ENCODE measurements at regions of chr10 and their contacts with region 1.

Region 1: GRCh38 chr10:71371750-71372166 is 25.0 kb upstream of the CDH23 start:
- DNase-seq: no peak
- ATAC-seq: peak; percentile 43
- H3K4me3 Mint-ChIP-seq: peak overlapping the region; percentile 50
- H3K27ac Mint-ChIP-seq: peak overlapping the region; percentile 90
- H3K4me1 Mint-ChIP-seq: peaks cover 44% of the 10 kb centered on the region
- H3K27me3 Mint-ChIP-seq: no peaks in the 10 kb centered on the region
- CTCF ChIP-seq: no peak

Region 2: DNA sequence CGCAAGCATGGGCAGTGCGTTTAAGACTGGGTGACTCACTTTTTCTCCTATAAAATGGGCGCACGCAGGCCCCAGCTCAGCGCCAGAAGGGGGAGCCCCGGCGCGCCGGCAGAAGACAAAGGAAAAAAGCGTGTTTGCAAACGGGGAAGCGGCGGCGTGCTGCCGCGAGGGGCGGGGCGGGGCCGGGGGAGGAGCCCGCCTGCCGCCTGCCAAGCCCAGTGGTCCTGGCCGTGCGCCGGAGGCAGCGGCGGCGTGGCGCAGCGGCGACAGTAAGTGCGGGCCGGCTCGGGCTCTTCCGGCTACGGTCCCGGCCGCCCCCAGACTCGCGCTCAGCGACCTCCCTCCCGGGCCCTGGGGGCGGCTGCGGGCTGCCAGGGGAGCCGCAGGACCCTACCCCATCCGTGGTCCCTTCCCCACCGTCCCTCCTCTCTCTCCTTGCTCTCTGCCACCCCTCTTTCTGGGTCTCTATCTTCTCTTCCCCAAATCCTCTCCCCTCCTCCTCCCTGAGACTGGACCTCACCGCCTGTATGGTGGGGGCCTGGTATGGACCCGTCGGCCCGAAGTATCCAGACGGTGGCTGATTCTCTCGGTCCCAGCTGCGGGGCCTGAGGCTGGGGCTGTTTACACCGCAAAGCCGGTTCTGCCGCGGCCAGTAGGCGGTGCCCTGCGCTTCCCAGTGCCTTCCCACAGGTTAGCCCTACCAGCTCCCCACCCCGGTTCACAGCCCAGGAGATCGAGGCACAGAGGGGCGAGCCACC is 52.5 kb before region 1 on chr10 and contains the start of gene SLC29A3:
- CTCF ChIA-PET with region 1: interaction called, 41 read pairs
- POLR2A ChIA-PET with region 1: interaction called, 34 read pairs
- intact Hi-C with region 1: loop called (anchors 1 kb)
- DNase-seq: peak; percentile 72
- ATAC-seq: peak; percentile 90
- H3K4me3 Mint-ChIP-seq: peak within 1 kb of the TSS; percentile 96
- H3K27ac Mint-ChIP-seq: peak within 1 kb of the TSS; percentile 80
- H3K4me1 Mint-ChIP-seq: peaks cover 13% of the 10 kb centered on the region
- H3K27me3 Mint-ChIP-seq: no peaks in the 10 kb centered on the region
- CTCF ChIP-seq: no peak
- total RNA-seq, gene SLC29A3: 3.1 and 4.3 TPM in 2 replicates

Region 3: GRCh38 chr10:71359364-71360046 is 12.3 kb before region 1 on chr10:
- CTCF ChIA-PET with region 1: no interaction called
- POLR2A ChIA-PET with region 1: interaction called, 12 read pairs
- intact Hi-C with region 1: loop called (anchors 1 kb)
- DNase-seq: no peak
- ATAC-seq: peak; percentile 80
- H3K4me3 Mint-ChIP-seq: no peak overlapping the region
- H3K27ac Mint-ChIP-seq: peak overlapping the region; percentile 72
- H3K4me1 Mint-ChIP-seq: peaks cover 24% of the 10 kb centered on the region
- H3K27me3 Mint-ChIP-seq: no peaks in the 10 kb centered on the region
- CTCF ChIP-seq: no peak

Region 4: GRCh38 chr10:71383972-71384687 is 12.4 kb after region 1 on chr10:
- CTCF ChIA-PET with region 1: interaction called, 15 read pairs
- POLR2A ChIA-PET with region 1: interaction called, 6 read pairs
- intact Hi-C with region 1: loop called (anchors 1 kb)
- DNase-seq: peak; percentile 82
- ATAC-seq: peak; percentile 100
- H3K4me3 Mint-ChIP-seq: no peak overlapping the region
- H3K27ac Mint-ChIP-seq: no peak overlapping the region
- H3K4me1 Mint-ChIP-seq: peaks cover 7% of the 10 kb centered on the region
- H3K27me3 Mint-ChIP-seq: peaks cover 3% of the 10 kb centered on the region
- CTCF ChIP-seq: no peak

Region 5: DNA sequence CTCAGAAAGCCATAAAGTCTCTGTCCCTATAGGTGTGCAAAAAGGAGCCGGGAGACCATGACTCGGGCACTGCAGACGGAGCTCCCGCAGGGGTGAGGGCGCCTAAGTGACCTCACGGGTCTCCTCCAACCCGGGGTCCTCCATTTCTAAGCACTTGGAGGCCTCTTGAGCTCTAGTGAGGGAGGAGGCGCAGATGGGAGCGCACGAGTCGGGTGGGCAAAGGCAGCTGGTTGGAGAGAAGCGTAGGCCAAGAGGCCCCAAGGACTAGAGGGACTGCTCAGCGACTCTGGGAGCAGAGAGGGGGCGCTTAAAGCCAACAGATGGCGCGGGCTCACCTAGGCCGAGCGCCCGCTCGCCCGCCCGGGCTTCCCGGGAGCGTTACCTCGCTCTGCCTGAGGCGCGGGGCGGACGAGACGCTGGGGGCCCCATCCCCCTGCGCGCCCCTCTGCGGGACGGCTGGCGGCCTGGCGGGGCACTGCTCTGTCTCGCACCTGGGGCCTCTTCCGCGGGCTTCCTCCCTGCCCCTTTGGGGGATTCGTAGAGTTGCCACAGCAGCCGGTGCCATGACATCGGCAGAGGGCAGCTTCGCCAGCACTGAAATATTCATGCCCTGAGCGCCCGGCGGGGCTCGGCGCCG is 24.4 kb after region 1 on chr10:
- CTCF ChIA-PET with region 1: interaction called, 3 read pairs
- POLR2A ChIA-PET with region 1: interaction called, 7 read pairs
- intact Hi-C with region 1: loop called (anchors 2 kb)
- DNase-seq: peak; percentile 54
- ATAC-seq: peak; percentile 71
- H3K4me3 Mint-ChIP-seq: peak overlapping the region; percentile 78
- H3K27ac Mint-ChIP-seq: no peak overlapping the region
- H3K4me1 Mint-ChIP-seq: peaks cover 8% of the 10 kb centered on the region
- H3K27me3 Mint-ChIP-seq: peaks cover 52% of the 10 kb centered on the region
- CTCF ChIP-seq: no peak

Region 6: DNA sequence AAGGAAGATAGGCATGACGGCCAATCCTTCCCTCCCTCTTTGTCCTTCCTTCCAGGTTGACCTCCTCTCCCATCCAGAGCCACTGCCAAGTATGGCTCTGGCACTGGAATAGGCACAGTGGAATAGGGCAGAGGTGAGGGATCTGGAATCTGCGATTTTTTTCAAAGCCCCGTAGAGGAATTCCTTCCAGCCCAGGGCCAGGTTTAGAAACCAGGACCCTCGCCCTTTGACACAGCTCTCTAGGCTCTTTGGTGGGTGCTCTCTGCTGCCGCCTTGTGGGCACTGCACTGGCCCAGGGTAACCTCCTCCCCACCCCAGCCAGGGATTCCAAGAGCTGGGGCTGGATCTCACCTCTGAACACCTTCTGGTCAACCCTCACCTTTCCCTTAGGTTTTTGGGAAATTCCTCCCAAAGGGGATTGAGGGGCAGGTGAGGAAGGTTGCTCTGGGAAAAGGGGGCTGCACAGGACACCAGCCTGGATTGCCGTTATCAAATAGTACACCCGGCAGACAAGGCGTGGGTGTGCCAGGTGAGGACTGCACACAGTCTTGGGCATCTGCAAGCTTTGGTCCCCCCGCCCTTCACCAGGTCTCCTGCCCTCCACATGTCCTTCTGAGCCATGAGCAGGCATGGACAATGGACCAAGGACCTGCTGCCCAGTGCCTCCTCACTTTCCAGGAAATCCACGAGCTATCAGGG is 325.0 kb after region 1 on chr10:
- CTCF ChIA-PET with region 1: no interaction called
- POLR2A ChIA-PET with region 1: interaction called, 17 read pairs
- intact Hi-C with region 1: loop called (anchors 10 kb)
- DNase-seq: peak; percentile 59
- ATAC-seq: no peak
- H3K4me3 Mint-ChIP-seq: no peak overlapping the region
- H3K27ac Mint-ChIP-seq: no peak overlapping the region
- H3K4me1 Mint-ChIP-seq: peaks cover 63% of the 10 kb centered on the region
- H3K27me3 Mint-ChIP-seq: no peaks in the 10 kb centered on the region
- CTCF ChIP-seq: peak; percentile 27

Region 7: GRCh38 chr10:72186258-72186981 is 814.7 kb after region 1 on chr10:
- CTCF ChIA-PET with region 1: no interaction called
- POLR2A ChIA-PET with region 1: interaction called, 12 read pairs
- intact Hi-C with region 1: no loop called
- DNase-seq: no peak
- ATAC-seq: no peak
- H3K4me3 Mint-ChIP-seq: no peak overlapping the region
- H3K27ac Mint-ChIP-seq: peak overlapping the region; percentile 24
- H3K4me1 Mint-ChIP-seq: peaks cover 12% of the 10 kb centered on the region
- H3K27me3 Mint-ChIP-seq: no peaks in the 10 kb centered on the region
- CTCF ChIP-seq: no peak

Measured in activated B cell treated with CpG ODN at 0.5 μM for 24 hours (primary cell).